Dendritic cell treated with granulocyte-macrophage colony-stimulating factor and Interleukin-4, amounts not matched to agents 40 ng/mL and 50 ng/mL, for 4 days (primary cell): ENCODE measurements at regions of chr3 and their contacts with region 1.

Region 1: DNA sequence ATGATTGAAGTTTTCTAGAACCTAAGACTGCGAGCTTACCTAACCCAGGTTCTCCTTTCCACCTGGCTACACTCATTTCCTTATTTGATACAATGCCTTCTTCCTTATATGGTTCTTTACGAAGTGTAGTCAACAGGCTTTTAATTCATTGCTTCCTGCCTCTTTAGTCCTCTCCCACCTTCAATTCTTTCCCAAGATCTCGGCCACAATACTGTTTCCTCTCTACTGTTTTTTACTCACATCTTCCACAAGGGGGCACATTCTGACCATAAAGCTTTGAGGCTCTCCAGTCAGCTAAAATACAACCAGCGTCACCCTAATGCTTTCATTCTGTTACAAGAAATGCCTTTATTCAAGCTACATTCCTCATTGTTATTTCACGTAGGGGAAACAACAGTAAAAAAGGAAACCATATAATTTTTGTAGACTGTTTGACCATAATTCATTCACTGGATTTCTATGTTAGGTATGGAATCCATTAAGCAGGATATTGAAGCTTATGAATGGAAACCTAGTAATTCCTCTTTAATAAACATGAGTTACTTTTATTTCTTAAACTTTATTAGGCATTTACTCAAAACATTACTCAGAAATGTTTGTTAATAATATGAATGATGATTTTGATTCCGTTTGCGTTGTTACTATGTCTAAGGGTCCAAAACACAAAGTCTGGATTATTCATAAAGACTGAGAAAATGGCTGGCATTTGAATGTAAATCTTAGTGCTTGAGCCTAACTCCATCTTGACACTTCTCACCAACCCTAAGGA is 29.5 kb upstream of the VEPH1 start:
- H3K4me3 Mint-ChIP-seq: no peak overlapping the region
- H3K27ac Mint-ChIP-seq: no peak overlapping the region
- H3K4me1 Mint-ChIP-seq: peaks cover 8% of the 10 kb centered on the region
- H3K27me3 Mint-ChIP-seq: no peaks in the 10 kb centered on the region

Region 2: GRCh38 chr3:157572559-157573270 is 40.0 kb after region 1 on chr3:
- intact Hi-C with region 1: loop called (anchors 1 kb)
- H3K4me3 Mint-ChIP-seq: no peak overlapping the region
- H3K27ac Mint-ChIP-seq: no peak overlapping the region
- H3K4me1 Mint-ChIP-seq: no peaks in the 10 kb centered on the region
- H3K27me3 Mint-ChIP-seq: no peaks in the 10 kb centered on the region